Uterus (tissue), 4 donors: ENCODE measurements at regions of chr11 and their contacts with region 1.

Region 1: GRCh38 chr11:47269002-47269828 is 718 bp upstream of the MADD start:
- DNase-seq: peak; percentile 90 to 91
- H3K4me3 ChIP-seq: peak overlapping the region; percentile 74 to 86
- H3K27ac ChIP-seq: peak overlapping the region; percentile 95 to 97
- H3K4me1 ChIP-seq: peaks cover 0 to 4% of the 10 kb centered on the region in 2 donors
- H3K27me3 ChIP-seq: no peaks in the 10 kb centered on the region
- CTCF ChIP-seq: peak in 2 of 4 experiments; percentile 3 to 28
- POLR2A ChIP-seq: no peak

Region 2: GRCh38 chr11:46948378-46949131 is 320.7 kb before region 1 on chr11:
- intact Hi-C with region 1: no loop called
- DNase-seq: no peak
- H3K4me3 ChIP-seq: no peak overlapping the region
- H3K27ac ChIP-seq: no peak overlapping the region
- H3K4me1 ChIP-seq: no peaks in the 10 kb centered on the region
- H3K27me3 ChIP-seq: no peaks in the 10 kb centered on the region
- CTCF ChIP-seq: no peak
- POLR2A ChIP-seq: no peak

Region 3: GRCh38 chr11:47161134-47161854 is 107.9 kb before region 1 on chr11:
- intact Hi-C with region 1: no loop called
- DNase-seq: peak; percentile 53 to 62
- H3K4me3 ChIP-seq: no peak overlapping the region
- H3K27ac ChIP-seq: peak overlapping the region in 1 of 2 donors; percentile 3
- H3K4me1 ChIP-seq: no peaks in the 10 kb centered on the region
- H3K27me3 ChIP-seq: no peaks in the 10 kb centered on the region
- CTCF ChIP-seq: peak; percentile 34 to 68 (median 48)
- POLR2A ChIP-seq: no peak

Region 4: GRCh38 chr11:47176328-47177228 is 92.6 kb before region 1 on chr11 and contains the start of gene ARFGAP2:
- intact Hi-C with region 1: loop called (anchors 10 kb)
- DNase-seq: peak; percentile 95 to 96
- H3K4me3 ChIP-seq: peak within 1 kb of the TSS; percentile 86 to 99
- H3K27ac ChIP-seq: peak within 1 kb of the TSS; percentile 98 to 99
- H3K4me1 ChIP-seq: peaks cover 3 to 26% of the 10 kb centered on the region in 2 donors
- H3K27me3 ChIP-seq: no peaks in the 10 kb centered on the region
- CTCF ChIP-seq: no peak
- POLR2A ChIP-seq: peak; percentile 13 to 66
- total RNA-seq, gene ARFGAP2: 57.4 to 243 (median 151) TPM